Transverse colon (tissue), 4 donors: ENCODE measurements at regions of chr20 and their contacts with region 1.

Region 1: GRCh38 chr20:41531518-41532275 is 86.5 kb downstream of the CHD6 start:
- DNase-seq: no peak
- H3K4me3 ChIP-seq: no peak overlapping the region
- H3K27ac ChIP-seq: no peak overlapping the region
- H3K4me1 ChIP-seq: peaks cover 0 to 19% (median 5%) of the 10 kb centered on the region in 4 donors
- H3K27me3 ChIP-seq: no peaks in the 10 kb centered on the region
- CTCF ChIP-seq: no peak
- EP300 ChIP-seq: no peak
- POLR2A ChIP-seq: no peak

Region 2: GRCh38 chr20:41560970-41561369 is 29.3 kb after region 1 on chr20:
- in situ Hi-C with region 1: no loop called
- intact Hi-C with region 1: loop called (anchors 1 kb)
- DNase-seq: no peak
- H3K4me3 ChIP-seq: no peak overlapping the region
- H3K27ac ChIP-seq: no peak overlapping the region
- H3K4me1 ChIP-seq: peaks cover 0 to 23% (median 5%) of the 10 kb centered on the region in 4 donors
- H3K27me3 ChIP-seq: no peaks in the 10 kb centered on the region
- CTCF ChIP-seq: no peak
- EP300 ChIP-seq: no peak
- POLR2A ChIP-seq: no peak